Pancreas (tissue), 10 donors: ENCODE measurements at regions of chr6 and their contacts with region 1.

Region 1: GRCh38 chr6:137944793-137945498 is 77.9 kb downstream of the TNFAIP3 start:
- DNase-seq: peak in 1 of 6 donors; percentile 14
- ATAC-seq: peak in 3 of 4 donors; percentile 87 to 94 (median 89)
- H3K4me3 ChIP-seq: no peak overlapping the region
- H3K27ac ChIP-seq: no peak overlapping the region
- H3K4me1 ChIP-seq: no peaks in the 10 kb centered on the region
- H3K27me3 ChIP-seq: no peaks in the 10 kb centered on the region
- CTCF ChIP-seq: peak; percentile 21 to 72 (median 55)

Region 2: DNA sequence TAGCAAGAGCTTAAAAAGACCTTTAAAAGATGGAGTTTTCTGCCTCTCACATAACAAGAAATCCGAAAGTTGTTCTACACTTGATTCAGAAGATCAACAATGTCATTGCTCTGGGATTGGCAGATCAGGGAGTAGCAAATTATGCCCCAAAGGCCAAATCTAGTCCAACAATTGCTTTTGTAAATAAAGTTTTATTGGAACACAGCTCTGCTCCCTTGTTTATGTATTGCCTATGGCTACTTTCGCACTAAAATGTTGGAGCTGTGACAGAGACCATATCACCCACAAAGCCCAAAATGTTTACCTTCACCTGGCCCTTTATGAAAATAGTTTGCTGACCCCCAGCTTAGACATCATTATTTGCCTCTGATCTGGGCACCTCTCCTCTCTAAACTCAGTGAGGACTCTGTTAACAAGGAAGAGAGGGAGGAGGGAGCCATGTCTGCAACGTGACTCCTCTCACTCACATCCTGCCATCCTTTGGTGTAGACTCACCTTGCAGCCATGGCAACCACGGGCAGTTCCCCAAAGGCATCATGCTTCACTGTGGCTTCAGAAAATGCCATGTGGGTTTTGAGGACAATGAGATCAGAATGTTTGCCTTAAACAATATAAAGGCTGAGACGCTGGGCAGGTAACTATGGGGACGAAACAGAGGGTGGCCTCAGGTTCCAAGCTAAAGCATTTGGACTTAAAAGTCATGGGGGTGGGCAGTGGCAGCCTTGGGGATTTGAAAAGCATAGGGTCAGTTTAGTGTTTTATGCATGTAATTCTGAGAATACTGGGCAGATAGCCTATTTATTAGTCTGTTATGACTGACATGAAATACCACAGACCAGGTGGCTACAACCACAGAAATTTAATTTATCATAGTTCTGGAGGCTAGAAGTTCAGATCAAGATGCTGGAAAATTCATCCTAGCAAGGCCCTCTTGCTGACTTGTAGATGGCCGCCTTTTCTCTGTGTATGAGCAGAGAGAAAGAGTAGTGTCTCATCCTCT is 227.6 kb before region 1 on chr6:
- intact Hi-C with region 1: loop called in 1 of 3 experiments (anchors 5 kb)
- DNase-seq: no peak
- ATAC-seq: no peak
- H3K4me3 ChIP-seq: no peak overlapping the region
- H3K27ac ChIP-seq: no peak overlapping the region
- H3K4me1 ChIP-seq: no peaks in the 10 kb centered on the region
- H3K27me3 ChIP-seq: no peaks in the 10 kb centered on the region
- CTCF ChIP-seq: no peak

Region 3: DNA sequence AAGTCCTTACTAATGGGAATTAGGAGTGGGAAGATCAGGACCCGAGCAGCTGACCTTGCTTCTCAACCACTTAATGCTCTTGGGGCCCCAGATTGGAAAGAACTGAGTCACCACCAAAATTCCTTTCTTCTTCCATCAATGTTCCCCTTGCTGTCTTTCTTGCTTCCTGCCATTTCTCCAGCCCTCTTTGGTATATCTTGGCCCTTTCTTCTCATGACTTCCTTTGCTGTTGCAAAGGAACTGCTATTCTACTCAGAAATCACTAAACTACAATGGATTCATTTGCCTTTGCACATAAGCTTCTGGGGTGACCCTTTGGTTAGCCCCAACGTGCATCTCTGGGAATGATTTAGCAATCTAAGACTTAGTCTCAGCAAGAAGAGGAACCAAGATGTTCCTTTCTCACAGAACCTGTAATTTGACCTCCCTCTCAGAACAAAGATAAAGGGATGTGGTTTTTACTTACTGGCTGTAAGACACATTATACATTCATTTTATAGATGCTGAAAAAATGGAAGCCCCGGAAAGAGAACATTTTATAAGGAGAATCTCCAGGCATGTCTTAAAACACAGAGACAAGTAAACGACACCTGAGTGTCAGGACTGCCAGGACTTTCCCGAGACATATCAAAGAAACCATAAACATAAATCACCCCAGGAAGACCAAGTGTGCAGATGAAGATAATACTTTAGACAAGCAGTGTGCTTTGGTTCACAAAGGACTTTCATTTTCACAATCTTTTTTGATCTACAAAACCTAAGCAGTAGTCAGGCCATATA is 176.8 kb before region 1 on chr6:
- intact Hi-C with region 1: no loop called
- DNase-seq: no peak
- ATAC-seq: no peak
- H3K4me3 ChIP-seq: no peak overlapping the region
- H3K27ac ChIP-seq: no peak overlapping the region
- H3K4me1 ChIP-seq: no peaks in the 10 kb centered on the region
- H3K27me3 ChIP-seq: no peaks in the 10 kb centered on the region
- CTCF ChIP-seq: no peak

Region 4: GRCh38 chr6:137866914-137867684 is 77.8 kb before region 1 on chr6 and contains the start of gene TNFAIP3:
- intact Hi-C with region 1: loop called in 1 of 3 experiments (anchors 10 kb)
- DNase-seq: peak; percentile 92 to 96 (median 94)
- ATAC-seq: peak; percentile 85 to 91 (median 88)
- H3K4me3 ChIP-seq: peak within 1 kb of the TSS; percentile 61 to 93 (median 88)
- H3K27ac ChIP-seq: peak within 1 kb of the TSS; percentile 90 to 97 (median 93)
- H3K4me1 ChIP-seq: peaks cover 0 to 17% (median 0%) of the 10 kb centered on the region in 3 donors
- H3K27me3 ChIP-seq: no peaks in the 10 kb centered on the region
- CTCF ChIP-seq: peak; percentile 70 to 87 (median 80)
- total RNA-seq, gene TNFAIP3: 9.3 to 59.2 (median 13.5) TPM